ENCODE measurements at regions of chr1 and their contacts with region 1.

Region 1: DNA sequence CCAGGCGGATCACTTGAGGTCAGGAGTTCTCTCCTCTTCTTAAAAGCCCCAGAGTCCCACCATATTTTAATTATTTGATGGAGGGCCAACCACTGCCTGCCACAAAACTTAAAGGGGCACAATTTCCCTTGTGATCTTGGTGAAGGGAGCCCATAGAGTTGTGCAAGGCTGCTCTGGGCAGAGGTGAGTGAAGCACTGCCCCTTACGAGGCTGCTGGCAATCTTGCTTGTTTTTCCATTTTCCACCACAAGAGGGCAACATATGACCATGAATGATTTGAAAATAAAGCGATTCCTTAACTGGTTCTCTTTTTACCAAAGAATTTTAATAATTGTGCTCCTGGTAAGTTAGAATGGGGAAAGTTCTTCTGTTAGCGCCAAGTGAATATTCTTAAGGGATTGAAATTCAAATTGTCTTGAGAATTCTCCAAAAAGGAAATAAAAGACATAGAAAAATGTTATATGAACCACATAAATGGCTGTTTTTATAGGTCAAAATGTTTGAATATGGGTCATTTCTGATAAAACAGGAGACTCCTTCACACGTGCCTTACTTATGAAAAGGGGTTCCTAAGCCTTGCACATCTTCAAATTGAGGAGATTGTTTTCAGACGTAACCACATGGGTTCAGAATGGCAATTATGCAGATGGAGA is 22.7 kb downstream of the PGM1 start:
- DNase-seq: peak; percentile 50 to 74
- H3K4me3 ChIP-seq: no peak overlapping the region
- H3K4me1 ChIP-seq: no peaks in the 10 kb centered on the region
- H3K27me3 ChIP-seq: no peaks in the 10 kb centered on the region

Region 2: GRCh38 chr1:64147759-64148158 is 531.9 kb after region 1 on chr1:
- in situ Hi-C with region 1: loop called (anchors 10 kb)
- DNase-seq: no peak
- H3K4me3 ChIP-seq: no peak overlapping the region
- H3K4me1 ChIP-seq: no peaks in the 10 kb centered on the region
- H3K27me3 ChIP-seq: peaks cover 19% of the 10 kb centered on the region

Region 3: DNA sequence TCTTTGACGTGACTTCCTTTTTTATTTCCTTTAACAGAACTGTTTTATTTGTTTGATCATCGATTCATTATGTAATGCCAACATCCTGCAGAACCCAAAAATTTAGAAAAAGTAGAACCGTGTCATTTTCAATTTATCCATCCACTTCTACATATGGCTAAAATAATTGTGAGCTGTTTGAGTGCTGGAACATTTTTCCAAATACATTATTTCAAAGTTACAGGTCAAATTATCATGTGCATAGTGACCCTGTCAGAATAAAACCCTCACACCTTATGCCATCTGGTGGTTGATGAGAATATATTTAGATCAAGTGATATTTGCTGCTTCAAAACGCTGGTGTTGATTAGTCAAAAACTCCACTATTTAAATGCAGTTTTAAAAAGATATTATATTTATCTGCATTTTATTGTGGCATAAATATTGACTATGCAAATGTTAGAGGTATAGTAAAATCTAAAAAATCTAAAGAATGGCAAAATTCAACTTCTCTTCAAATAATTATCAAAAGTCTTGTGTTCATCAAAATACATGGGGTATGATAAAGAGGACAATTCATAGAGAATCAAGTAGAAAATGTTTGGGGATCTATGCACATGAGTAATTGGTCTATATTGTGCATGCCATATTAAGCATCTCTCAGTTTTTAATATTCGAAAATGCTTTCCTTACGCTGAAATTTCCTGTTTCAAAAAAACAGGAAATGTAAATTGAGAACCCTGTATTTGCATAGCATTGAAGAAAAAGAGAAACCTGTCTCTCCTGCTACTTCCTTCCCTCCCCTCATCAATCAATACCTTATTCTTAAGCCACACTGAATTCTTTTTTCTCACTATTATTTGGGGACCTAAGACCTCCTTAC is 627.2 kb after region 1 on chr1:
- in situ Hi-C with region 1: loop called (anchors 5 kb)
- DNase-seq: peak in 1 of 2 experiments; percentile 32
- H3K4me3 ChIP-seq: no peak overlapping the region
- H3K4me1 ChIP-seq: peaks cover 2% of the 10 kb centered on the region; the same call in 1 of the 2 replicates
- H3K27me3 ChIP-seq: no peaks in the 10 kb centered on the region

Measured in HAP-1 (cell line).